AG04449 (cell line): ENCODE measurements at regions of chr17 and their contacts with region 1.

Region 1: GRCh38 chr17:32877164-32877764 is 340 bp upstream of the MYO1D start:
- DNase-seq: no peak
- H3K4me3 ChIP-seq: peak overlapping the region; percentile 63
- CTCF ChIP-seq: peak; percentile 79

Region 2: GRCh38 chr17:32546031-32546444 is 331.2 kb before region 1 on chr17:
- CTCF ChIA-PET with region 1: no interaction called
- POLR2A ChIA-PET with region 1: no interaction called
- DNase-seq: no peak
- H3K4me3 ChIP-seq: no peak overlapping the region
- CTCF ChIP-seq: no peak

Region 3: GRCh38 chr17:32693194-32693897 is 183.9 kb before region 1 on chr17:
- CTCF ChIA-PET with region 1: no interaction called
- POLR2A ChIA-PET with region 1: no interaction called
- DNase-seq: no peak
- H3K4me3 ChIP-seq: no peak overlapping the region
- CTCF ChIP-seq: no peak

Region 4: GRCh38 chr17:32783602-32784001 is 93.7 kb before region 1 on chr17:
- CTCF ChIA-PET with region 1: interaction called, 81 read pairs
- POLR2A ChIA-PET with region 1: no interaction called
- DNase-seq: peak; percentile 19
- H3K4me3 ChIP-seq: no peak overlapping the region
- CTCF ChIP-seq: peak; percentile 47

Region 5: DNA sequence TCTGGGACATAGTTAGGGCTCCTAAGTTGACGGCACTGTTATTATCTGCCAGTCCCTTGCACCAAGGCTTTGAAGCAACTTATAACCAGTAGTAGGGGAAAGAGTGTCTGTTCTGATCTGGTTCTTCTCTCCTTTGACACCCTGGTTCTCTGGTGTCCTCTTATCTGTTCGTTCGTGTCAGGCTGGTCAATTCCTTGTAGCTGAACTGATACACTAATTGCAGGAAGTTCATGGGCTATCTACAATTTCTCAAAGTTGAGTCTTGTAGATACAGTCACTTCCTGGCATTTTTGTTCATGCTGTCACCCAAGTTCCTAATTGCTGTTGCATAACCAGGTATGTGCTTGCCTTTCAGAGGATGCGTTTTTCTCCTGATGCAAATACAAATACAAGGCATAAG is 17.0 kb after region 1 on chr17:
- CTCF ChIA-PET with region 1: interaction called, 17 read pairs
- POLR2A ChIA-PET with region 1: no interaction called
- DNase-seq: no peak
- H3K4me3 ChIP-seq: no peak overlapping the region
- CTCF ChIP-seq: no peak

Region 6: DNA sequence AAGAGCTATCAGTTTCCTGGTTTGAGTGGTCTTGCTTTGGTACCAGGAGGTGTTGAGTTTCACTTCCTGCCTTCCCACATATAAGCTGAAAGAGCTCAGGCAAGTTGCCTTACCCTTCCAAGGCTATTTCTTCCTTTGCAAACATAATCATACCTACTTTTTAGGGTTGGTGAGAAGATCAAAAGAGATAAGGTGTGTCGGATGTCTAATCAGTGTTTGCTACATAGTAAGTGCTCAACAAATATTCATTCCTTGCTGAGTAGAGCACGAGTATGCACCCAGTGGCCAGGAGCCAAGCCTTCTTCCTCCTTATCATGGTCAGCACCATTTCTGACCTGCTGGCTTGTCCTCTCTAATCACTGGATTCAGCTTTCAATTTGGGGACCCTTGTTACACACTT is 38.0 kb after region 1 on chr17:
- CTCF ChIA-PET with region 1: interaction called, 27 read pairs
- POLR2A ChIA-PET with region 1: no interaction called
- DNase-seq: no peak
- H3K4me3 ChIP-seq: no peak overlapping the region
- CTCF ChIP-seq: no peak

Region 7: DNA sequence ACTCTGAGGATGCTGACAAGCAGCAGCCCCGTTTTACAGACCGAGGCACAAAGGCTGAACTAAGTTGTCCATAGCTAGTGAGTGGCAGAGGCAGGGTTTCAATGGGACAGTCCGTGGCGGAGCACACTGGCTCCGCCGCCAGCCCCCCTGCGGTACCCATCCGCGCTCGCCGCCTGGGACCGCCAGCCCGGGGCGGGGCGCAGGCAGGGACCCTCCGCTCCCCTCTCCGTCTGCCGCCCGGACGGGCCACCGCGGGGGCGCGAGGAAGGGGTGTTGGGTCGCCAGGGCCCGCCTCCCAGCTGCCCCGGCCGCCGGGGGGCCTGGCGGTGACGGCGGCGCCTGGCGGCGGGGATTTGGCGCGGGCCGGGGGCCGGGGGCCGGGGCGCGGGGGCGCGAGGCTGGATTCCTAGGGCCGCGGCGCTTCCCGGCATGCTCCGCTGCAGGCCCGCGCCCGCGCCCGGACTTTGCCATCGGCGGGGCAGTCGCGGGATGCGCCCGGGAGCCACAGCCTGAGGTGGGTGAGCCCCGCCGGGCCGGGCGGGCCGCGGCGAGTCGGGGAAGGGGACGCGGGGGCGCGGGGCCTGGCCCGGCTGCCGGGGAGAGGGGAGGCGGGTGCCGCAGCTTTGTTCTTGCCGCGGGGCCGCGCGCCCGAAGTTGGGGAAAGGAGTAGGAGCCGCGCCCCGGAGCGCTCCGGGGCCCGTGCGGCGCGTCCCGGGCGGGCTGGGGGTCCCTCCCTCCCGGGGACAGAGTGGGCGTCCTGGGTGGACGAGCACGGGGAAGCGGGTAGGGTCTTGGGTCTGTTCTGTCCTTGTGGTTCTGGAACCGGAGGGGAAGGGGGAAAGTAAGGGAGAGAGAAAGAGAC is 50.7 kb after region 1 on chr17 and contains the start of gene TMEM98:
- CTCF ChIA-PET with region 1: interaction called, 23 read pairs
- POLR2A ChIA-PET with region 1: no interaction called
- DNase-seq: no peak
- H3K4me3 ChIP-seq: peak within 1 kb of the TSS; percentile 70
- CTCF ChIP-seq: no peak